HEK293 (cell line): ENCODE measurements at regions of chr3 and their contacts with region 1.

Region 1: GRCh38 chr3:119676771-119677640 is at the start of gene COX17:
- H3K4me3 ChIP-seq: peak within 1 kb of the TSS; percentile 81
- H3K27ac ChIP-seq: peak within 1 kb of the TSS; percentile 87
- H3K4me1 ChIP-seq: no peaks in the 10 kb centered on the region
- CTCF ChIP-seq: no peak

Region 2: GRCh38 chr3:118970819-118971218 is 706.2 kb before region 1 on chr3:
- CTCF ChIA-PET with region 1: no interaction called
- POLR2A ChIA-PET with region 1: no interaction called
- H3K4me3 ChIP-seq: no peak overlapping the region
- H3K27ac ChIP-seq: no peak overlapping the region
- H3K4me1 ChIP-seq: no peaks in the 10 kb centered on the region
- CTCF ChIP-seq: no peak

Region 3: GRCh38 chr3:119279101-119279554 is 397.9 kb before region 1 on chr3:
- CTCF ChIA-PET with region 1: interaction called, 10 read pairs
- POLR2A ChIA-PET with region 1: interaction called, 3 read pairs
- H3K4me3 ChIP-seq: no peak overlapping the region
- H3K27ac ChIP-seq: no peak overlapping the region
- H3K4me1 ChIP-seq: no peaks in the 10 kb centered on the region
- CTCF ChIP-seq: no peak

Region 4: GRCh38 chr3:119420196-119420595 is 256.8 kb before region 1 on chr3:
- CTCF ChIA-PET with region 1: interaction called, 11 read pairs
- POLR2A ChIA-PET with region 1: no interaction called
- H3K4me3 ChIP-seq: no peak overlapping the region
- H3K27ac ChIP-seq: no peak overlapping the region
- H3K4me1 ChIP-seq: no peaks in the 10 kb centered on the region
- CTCF ChIP-seq: no peak

Region 5: GRCh38 chr3:119485563-119485962 is 191.4 kb before region 1 on chr3:
- CTCF ChIA-PET with region 1: no interaction called
- POLR2A ChIA-PET with region 1: no interaction called
- H3K4me3 ChIP-seq: no peak overlapping the region
- H3K27ac ChIP-seq: no peak overlapping the region
- H3K4me1 ChIP-seq: no peaks in the 10 kb centered on the region
- CTCF ChIP-seq: no peak

Region 6: DNA sequence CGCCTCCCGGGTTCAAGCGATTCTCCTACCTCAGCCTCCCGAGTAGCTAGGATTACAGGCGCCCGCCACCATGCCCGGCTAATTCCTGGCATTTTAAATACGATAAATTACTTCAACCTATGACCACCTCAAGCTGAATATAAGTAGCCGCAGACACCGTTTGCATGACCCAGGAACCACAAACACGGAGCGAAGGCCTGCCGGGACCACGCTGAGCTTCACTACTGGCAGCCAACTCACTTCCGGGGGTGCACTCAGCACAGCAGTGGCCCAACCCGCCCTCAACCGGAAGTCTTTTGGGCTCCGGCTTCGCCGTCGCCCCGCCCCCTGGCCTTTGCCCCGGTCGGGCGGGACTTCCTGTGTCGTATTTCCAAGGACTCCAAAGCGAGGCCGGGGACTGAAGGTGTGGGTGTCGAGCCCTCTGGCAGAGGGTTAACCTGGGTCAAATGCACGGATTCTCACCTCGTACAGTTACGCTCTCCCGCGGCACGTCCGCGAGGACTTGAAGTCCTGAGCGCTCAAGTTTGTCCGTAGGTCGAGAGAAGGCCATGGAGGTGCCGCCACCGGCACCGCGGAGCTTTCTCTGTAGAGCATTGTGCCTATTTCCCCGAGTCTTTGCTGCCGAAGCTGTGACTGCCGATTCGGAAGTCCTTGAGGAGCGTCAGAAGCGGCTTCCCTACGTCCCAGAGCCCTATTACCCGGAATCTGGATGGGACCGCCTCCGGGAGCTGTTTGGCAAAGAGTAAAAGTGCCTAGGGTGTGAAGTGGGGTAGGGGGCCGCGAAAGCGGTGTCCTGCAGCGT is 178.6 kb before region 1 on chr3 and contains the start of gene TIMMDC1:
- CTCF ChIA-PET with region 1: interaction called, 4 read pairs
- POLR2A ChIA-PET with region 1: interaction called, 11 read pairs
- H3K4me3 ChIP-seq: peak within 1 kb of the TSS; percentile 95
- H3K27ac ChIP-seq: peak within 1 kb of the TSS; percentile 85
- H3K4me1 ChIP-seq: no peaks in the 10 kb centered on the region
- CTCF ChIP-seq: no peak

Region 7: DNA sequence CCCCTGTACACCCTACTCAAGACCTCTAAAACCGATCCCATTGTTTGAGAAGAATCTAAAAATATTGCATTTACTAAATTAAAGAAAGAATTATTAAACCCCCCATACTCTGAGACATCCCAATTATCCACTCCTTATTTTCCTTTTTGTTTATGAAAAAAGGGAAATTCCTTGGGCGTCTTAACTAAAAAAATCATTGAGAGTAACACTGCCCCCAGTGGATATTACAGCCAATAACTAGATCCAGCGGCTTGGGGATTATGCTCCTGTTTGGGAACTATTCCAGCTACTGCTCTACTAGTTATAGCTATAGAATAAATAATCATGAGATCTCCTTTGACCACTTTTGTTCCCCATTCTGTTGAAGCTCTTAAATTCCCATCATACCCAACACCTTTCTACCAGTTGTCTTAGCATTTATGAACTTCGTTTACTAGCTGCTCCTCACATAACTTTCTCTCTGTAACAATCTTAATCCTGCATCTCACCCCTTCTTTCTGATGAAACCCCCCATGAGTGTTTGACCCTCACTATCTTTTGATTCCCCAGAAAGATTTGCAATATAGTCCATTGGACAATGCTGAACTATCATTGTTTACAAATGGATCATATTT is 13.1 kb after region 1 on chr3:
- CTCF ChIA-PET with region 1: interaction called, 10 read pairs
- POLR2A ChIA-PET with region 1: interaction called, 3 read pairs
- H3K4me3 ChIP-seq: no peak overlapping the region
- H3K27ac ChIP-seq: no peak overlapping the region
- H3K4me1 ChIP-seq: no peaks in the 10 kb centered on the region
- CTCF ChIP-seq: no peak